Transverse colon (tissue), 4 donors: ENCODE measurements at regions of chr14 and their contacts with region 1.

Region 1: DNA sequence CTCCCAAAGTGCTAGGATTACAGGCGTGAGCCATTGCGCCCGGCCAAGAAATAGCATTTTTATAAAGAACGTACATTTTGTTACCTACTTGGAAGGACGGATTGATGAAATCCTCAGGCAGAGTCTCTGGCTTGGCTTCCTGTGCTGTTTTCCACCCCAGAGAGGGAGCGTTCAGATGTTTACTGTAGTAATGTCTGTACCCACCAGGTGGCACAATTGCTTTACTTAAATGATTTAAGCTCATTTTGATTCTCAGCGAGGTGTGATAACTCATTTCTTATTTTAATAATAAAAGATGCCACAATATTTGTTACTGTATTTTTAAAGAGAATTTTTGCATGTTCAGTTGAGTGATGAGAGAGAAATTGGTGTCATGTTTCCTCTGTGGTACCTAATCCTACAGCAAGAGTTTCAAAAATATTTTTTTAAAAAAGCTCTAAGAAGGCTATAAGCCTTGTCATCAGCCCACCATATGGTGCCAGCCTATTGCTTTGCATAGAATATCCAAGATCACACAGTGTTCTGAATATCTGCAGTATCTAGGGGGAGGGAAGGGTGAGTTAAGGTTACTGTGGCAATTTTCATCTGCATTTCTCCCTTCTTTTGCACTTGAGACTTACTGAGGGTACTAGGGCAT is 82.6 kb upstream of the TRAF3 start:
- DNase-seq: peak; percentile 63
- H3K4me3 ChIP-seq: no peak overlapping the region
- H3K27ac ChIP-seq: no peak overlapping the region
- H3K4me1 ChIP-seq: peaks cover 9 to 63% (median 22%) of the 10 kb centered on the region in 4 donors
- H3K27me3 ChIP-seq: no peaks in the 10 kb centered on the region
- CTCF ChIP-seq: peak; percentile 68 to 86 (median 77)
- EP300 ChIP-seq: no peak
- POLR2A ChIP-seq: no peak

Region 2: GRCh38 chr14:101754893-101755292 is 939.8 kb before region 1 on chr14:
- in situ Hi-C with region 1: no loop called
- intact Hi-C with region 1: loop called (anchors 5 kb)
- DNase-seq: no peak
- H3K4me3 ChIP-seq: no peak overlapping the region
- H3K27ac ChIP-seq: no peak overlapping the region
- H3K4me1 ChIP-seq: peaks cover 0 to 2% (median 1%) of the 10 kb centered on the region in 4 donors
- H3K27me3 ChIP-seq: peaks cover 36% of the 10 kb centered on the region
- CTCF ChIP-seq: no peak
- EP300 ChIP-seq: no peak
- POLR2A ChIP-seq: no peak

Region 3: GRCh38 chr14:102917469-102918211 is 223.0 kb after region 1 on chr14:
- in situ Hi-C with region 1: loop called in 1 of 4 experiments (anchors 25 kb)
- intact Hi-C with region 1: loop called (anchors 5 kb)
- DNase-seq: peak; percentile 70
- H3K4me3 ChIP-seq: no peak overlapping the region
- H3K27ac ChIP-seq: no peak overlapping the region
- H3K4me1 ChIP-seq: peaks cover 0 to 4% (median 0%) of the 10 kb centered on the region in 4 donors
- H3K27me3 ChIP-seq: peaks cover 3% of the 10 kb centered on the region
- CTCF ChIP-seq: peak; percentile 41 to 58 (median 55)
- EP300 ChIP-seq: no peak
- POLR2A ChIP-seq: no peak